Posterior cingulate gyrus (tissue), 11 donors: ENCODE measurements at regions of chr4 and their contacts with region 1.

Region 1: GRCh38 chr4:41384992-41385391 is 128.3 kb downstream of the UCHL1 start:
- DNase-seq: peak in 9 of 10 donors; percentile 41 to 89 (median 62)

Region 2: GRCh38 chr4:41418444-41418843 is 33.5 kb after region 1 on chr4:
- intact Hi-C with region 1: loop called (anchors 5 kb)
- DNase-seq: peak; percentile 31 to 94 (median 66)

Region 3: GRCh38 chr4:41661442-41662076 is 276.6 kb after region 1 on chr4:
- intact Hi-C with region 1: no loop called
- DNase-seq: peak; percentile 28 to 94 (median 68)